CD4-positive, alpha-beta T cell (primary cell): ENCODE measurements at regions of chr1 and their contacts with region 1.

Region 1: GRCh38 chr1:108691942-108692723 is at the start of gene PRPF38B:
- DNase-seq: peak; percentile 88 to 97 (median 91)
- ATAC-seq: peak; percentile 84
- H3K4me3 ChIP-seq: peak within 1 kb of the TSS; percentile 89
- H3K4me3 Mint-ChIP-seq: peak within 1 kb of the TSS; percentile 95
- H3K27ac ChIP-seq: peak within 1 kb of the TSS; percentile 99
- H3K27ac Mint-ChIP-seq: peak within 1 kb of the TSS; percentile 97
- H3K4me1 ChIP-seq: peaks cover 24% of the 10 kb centered on the region
- H3K4me1 Mint-ChIP-seq: peaks cover 51% of the 10 kb centered on the region
- H3K27me3 ChIP-seq: no peaks in the 10 kb centered on the region
- H3K27me3 Mint-ChIP-seq: no peaks in the 10 kb centered on the region
- CTCF ChIP-seq: no peak
- total RNA-seq, gene PRPF38B: 114 to 120 TPM

Region 2: DNA sequence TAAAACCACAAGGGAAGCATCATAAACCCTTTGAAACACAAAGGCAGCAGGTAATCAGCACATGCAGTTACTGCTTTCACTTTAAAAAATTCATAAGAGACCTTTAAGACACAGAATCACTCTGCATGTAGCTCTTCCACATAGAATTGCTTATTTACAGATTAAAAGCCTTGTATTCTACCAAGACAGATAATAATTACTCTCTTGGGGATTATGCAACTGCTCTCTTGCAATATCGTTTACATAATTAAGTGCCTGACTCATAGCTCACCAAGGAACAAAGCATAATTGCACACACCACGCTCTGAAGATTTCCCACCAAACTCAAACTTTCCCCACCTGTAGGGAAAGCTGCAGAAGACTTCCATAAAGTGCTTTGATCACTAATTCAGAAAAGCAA is 815.0 kb before region 1 on chr1:
- CTCF ChIA-PET with region 1: no interaction called
- POLR2A ChIA-PET with region 1: no interaction called
- intact Hi-C with region 1: no loop called
- DNase-seq: peak in 2 of 14 experiments; percentile 36 to 40
- ATAC-seq: no peak
- H3K4me3 ChIP-seq: no peak overlapping the region
- H3K4me3 Mint-ChIP-seq: no peak overlapping the region
- H3K27ac ChIP-seq: no peak overlapping the region
- H3K27ac Mint-ChIP-seq: no peak overlapping the region
- H3K4me1 ChIP-seq: no peaks in the 10 kb centered on the region
- H3K4me1 Mint-ChIP-seq: peaks cover 4% of the 10 kb centered on the region
- H3K27me3 ChIP-seq: no peaks in the 10 kb centered on the region
- H3K27me3 Mint-ChIP-seq: no peaks in the 10 kb centered on the region
- CTCF ChIP-seq: no peak

Region 3: DNA sequence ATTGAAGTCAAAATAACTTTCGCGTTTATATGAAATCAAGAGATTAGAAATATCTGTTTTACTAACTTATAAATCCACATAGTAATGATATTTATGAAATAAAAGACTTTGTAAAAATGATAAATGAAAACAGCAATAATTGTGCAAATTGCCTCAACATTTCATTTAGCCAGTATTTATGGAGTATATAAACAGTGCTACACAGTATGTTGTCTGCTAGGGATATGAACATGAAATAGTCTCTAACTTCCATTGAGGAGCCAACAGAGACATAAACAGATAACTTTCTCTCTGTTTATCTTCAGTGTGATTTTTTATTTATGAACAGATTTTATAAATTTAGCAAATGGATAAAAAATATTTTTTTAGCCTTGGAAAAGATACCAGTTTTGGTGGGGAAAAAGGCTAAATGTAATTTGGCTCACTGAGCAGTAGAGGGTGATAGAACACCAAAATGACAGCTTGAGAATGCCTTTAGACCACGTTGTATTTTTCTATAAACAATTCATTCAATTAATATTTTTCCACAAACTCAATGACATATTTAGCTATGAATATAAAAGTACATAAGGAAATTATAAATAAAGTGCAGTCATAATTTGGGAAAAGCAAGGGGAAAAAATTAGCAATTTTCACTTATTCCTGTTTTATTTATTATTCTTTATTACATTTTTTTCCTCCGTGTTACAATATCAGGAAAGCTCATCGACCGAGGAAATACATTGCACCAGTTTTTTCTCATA is 179.7 kb before region 1 on chr1:
- CTCF ChIA-PET with region 1: interaction called, 11 read pairs
- POLR2A ChIA-PET with region 1: interaction called, 9 read pairs
- intact Hi-C with region 1: loop called in 1 of 2 experiments (anchors 5 kb)
- DNase-seq: peak in 4 of 14 experiments; percentile 6 to 75 (median 69)
- ATAC-seq: peak; percentile 77
- H3K4me3 ChIP-seq: no peak overlapping the region
- H3K4me3 Mint-ChIP-seq: no peak overlapping the region
- H3K27ac ChIP-seq: no peak overlapping the region
- H3K27ac Mint-ChIP-seq: no peak overlapping the region
- H3K4me1 ChIP-seq: no peaks in the 10 kb centered on the region
- H3K4me1 Mint-ChIP-seq: no peaks in the 10 kb centered on the region
- H3K27me3 ChIP-seq: peaks cover 0 to 10% of the 10 kb centered on the region in 2 experiments
- H3K27me3 Mint-ChIP-seq: peaks cover 13% of the 10 kb centered on the region
- CTCF ChIP-seq: peak; percentile 99

Region 4: DNA sequence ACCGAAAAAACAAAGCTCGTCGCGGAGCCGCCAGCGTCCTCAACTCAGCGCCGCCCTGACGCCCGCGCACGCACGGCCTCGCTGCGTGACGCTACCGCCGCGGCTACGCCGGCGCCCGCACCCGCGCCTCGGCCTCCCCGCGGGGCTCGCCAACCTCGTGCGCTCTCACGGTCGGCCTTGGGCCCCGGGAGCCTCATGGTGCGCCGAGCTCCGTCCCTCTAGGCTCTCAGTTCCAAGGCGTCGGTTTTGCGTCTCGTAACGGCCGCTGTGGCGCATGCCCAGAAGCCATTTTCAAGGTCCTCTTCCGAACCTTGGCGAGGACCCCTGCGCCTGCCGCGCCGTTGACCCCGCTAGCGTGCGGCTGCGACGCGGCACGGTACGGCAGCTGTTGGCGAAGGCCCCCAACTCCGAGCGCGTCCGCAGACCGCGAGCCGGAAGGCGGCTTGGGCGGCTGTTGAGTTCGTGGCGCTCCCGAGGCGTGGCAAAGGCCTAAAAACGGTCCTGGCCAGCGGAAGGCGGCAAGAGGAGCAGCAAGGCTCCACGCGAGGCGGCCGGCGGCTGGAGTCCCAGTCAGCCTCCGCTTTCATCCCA is 31.0 kb before region 1 on chr1 and contains the start of gene HENMT1:
- CTCF ChIA-PET with region 1: interaction called, 15 read pairs
- POLR2A ChIA-PET with region 1: interaction called, 292 read pairs
- intact Hi-C with region 1: loop called in 1 of 2 experiments (anchors 1 kb)
- DNase-seq: peak; percentile 65 to 95 (median 76)
- ATAC-seq: peak; percentile 88
- H3K4me3 ChIP-seq: peak within 1 kb of the TSS; percentile 65
- H3K4me3 Mint-ChIP-seq: peak within 1 kb of the TSS; percentile 82
- H3K27ac ChIP-seq: peak within 1 kb of the TSS; percentile 95 to 96
- H3K27ac Mint-ChIP-seq: peak within 1 kb of the TSS; percentile 99
- H3K4me1 ChIP-seq: peaks cover 12% of the 10 kb centered on the region
- H3K4me1 Mint-ChIP-seq: peaks cover 43% of the 10 kb centered on the region
- H3K27me3 ChIP-seq: no peaks in the 10 kb centered on the region
- H3K27me3 Mint-ChIP-seq: no peaks in the 10 kb centered on the region
- CTCF ChIP-seq: no peak
- total RNA-seq, gene HENMT1: 6.3 to 8.2 TPM

Region 5: DNA sequence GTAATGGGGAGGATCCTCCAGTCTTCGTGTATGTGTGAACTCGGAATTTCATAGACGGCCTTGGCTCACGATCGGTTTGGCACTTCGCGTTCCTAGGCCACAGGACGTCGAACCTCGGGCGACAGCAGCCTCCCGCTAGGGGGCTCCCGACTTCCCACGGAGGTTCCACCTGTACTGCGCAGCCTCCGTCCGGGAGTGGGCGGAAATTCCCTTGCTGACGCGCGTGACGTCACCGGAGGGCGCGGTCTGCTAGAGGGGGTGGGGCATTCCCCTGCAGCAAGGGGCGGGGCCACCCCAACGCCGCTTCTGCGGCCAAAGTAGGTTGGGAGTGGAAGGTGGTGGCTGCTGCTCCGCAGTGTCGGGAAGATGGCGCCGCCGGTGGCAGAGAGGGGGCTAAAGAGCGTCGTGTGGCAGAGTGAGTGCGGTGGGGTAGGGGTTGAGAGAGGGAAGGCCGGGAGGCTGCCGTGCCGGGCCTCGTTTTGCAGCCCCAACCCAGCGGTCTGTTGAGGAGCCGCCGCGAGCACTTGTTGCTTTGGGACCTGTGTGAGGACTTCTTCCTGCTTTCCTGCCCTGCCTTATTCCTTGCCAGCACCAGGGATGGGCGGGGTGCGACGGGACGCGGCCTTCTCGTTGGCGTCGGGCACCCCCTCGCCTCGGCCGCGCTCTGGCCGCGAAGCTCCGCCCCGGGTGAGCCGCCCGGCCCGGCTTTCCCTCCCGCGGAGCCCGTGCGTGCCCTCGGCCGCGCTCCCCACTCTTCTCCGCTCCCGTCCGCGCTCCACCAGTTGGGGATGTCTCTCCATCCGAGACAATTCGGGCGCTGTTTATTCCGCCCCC is 54.5 kb after region 1 on chr1 and contains the start of gene STXBP3:
- CTCF ChIA-PET with region 1: interaction called, 4 read pairs
- POLR2A ChIA-PET with region 1: interaction called, 24 read pairs
- intact Hi-C with region 1: loop called (anchors 2 kb)
- DNase-seq: peak; percentile 99 to 100 (median 100)
- ATAC-seq: peak; percentile 95
- H3K4me3 ChIP-seq: peak within 1 kb of the TSS; percentile 92
- H3K4me3 Mint-ChIP-seq: peak within 1 kb of the TSS; percentile 97
- H3K27ac ChIP-seq: peak within 1 kb of the TSS; percentile 90 to 95
- H3K27ac Mint-ChIP-seq: peak within 1 kb of the TSS; percentile 91
- H3K4me1 ChIP-seq: peaks cover 14% of the 10 kb centered on the region
- H3K4me1 Mint-ChIP-seq: peaks cover 44% of the 10 kb centered on the region
- H3K27me3 ChIP-seq: no peaks in the 10 kb centered on the region
- H3K27me3 Mint-ChIP-seq: no peaks in the 10 kb centered on the region
- CTCF ChIP-seq: peak; percentile 92
- total RNA-seq, gene STXBP3: 41.6 to 50.5 TPM

Region 6: GRCh38 chr1:108877348-108878159 is 185.4 kb after region 1 on chr1:
- CTCF ChIA-PET with region 1: no interaction called
- POLR2A ChIA-PET with region 1: interaction called, 9 read pairs
- intact Hi-C with region 1: loop called in 1 of 2 experiments (anchors 5 kb)
- DNase-seq: peak in 1 of 14 experiments; percentile 6
- ATAC-seq: no peak
- H3K4me3 ChIP-seq: peak overlapping the region; percentile 75
- H3K4me3 Mint-ChIP-seq: peak overlapping the region; percentile 95
- H3K27ac ChIP-seq: no peak overlapping the region
- H3K27ac Mint-ChIP-seq: peak overlapping the region; percentile 1
- H3K4me1 ChIP-seq: peaks cover 16% of the 10 kb centered on the region
- H3K4me1 Mint-ChIP-seq: peaks cover 10% of the 10 kb centered on the region
- H3K27me3 ChIP-seq: peaks cover 0 to 6% of the 10 kb centered on the region in 2 experiments
- H3K27me3 Mint-ChIP-seq: no peaks in the 10 kb centered on the region
- CTCF ChIP-seq: no peak

Region 7: GRCh38 chr1:108913105-108913948 is 221.2 kb after region 1 on chr1:
- CTCF ChIA-PET with region 1: no interaction called
- POLR2A ChIA-PET with region 1: no interaction called
- intact Hi-C with region 1: no loop called
- DNase-seq: no peak
- ATAC-seq: no peak
- H3K4me3 ChIP-seq: no peak overlapping the region
- H3K4me3 Mint-ChIP-seq: no peak overlapping the region
- H3K27ac ChIP-seq: no peak overlapping the region
- H3K27ac Mint-ChIP-seq: no peak overlapping the region
- H3K4me1 ChIP-seq: no peaks in the 10 kb centered on the region
- H3K4me1 Mint-ChIP-seq: no peaks in the 10 kb centered on the region
- H3K27me3 ChIP-seq: no peaks in the 10 kb centered on the region
- H3K27me3 Mint-ChIP-seq: no peaks in the 10 kb centered on the region
- CTCF ChIP-seq: no peak

Region 8: DNA sequence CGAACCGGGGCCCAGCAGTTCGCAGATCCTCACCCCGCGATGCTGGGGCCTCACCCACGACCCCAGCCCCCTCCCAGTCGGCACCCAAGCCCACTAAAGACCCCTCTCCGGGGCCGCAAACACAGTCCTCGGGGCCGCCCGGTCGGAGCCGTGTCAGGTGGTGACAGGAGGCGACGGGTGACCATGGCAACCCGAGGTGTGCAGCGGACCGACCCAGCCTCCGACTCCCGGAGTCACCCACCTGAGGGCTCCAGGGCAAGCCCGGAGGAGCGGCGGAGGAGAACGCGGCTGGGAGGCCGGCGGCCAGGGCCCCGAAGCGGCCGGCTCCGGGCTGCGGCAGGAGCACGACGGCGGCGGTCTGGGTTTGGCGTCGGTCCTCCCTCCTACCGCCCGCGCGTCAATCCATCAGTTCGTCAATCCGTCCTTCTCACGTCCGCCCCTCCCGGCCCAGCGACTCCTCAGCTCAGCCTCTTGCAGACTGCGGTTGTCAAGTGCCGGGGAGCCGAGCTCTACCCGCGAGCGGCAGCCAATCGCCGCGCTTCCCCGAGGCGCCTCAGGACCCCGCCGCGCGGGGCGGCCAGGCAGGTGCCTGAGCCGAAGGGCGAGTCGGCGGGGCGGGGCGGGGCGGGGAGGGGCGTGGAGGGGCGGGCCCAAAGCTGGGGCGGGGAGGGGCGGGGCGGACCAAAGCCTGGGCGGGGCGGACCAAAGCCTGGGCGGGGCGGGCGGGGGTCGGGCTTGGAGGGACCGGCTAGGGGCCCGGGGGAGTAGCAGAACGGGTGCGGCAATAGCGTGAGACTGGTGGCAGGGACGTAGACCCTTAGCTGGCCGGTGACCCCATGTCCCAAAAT is 349.7 kb after region 1 on chr1 and contains the start of gene WDR47:
- CTCF ChIA-PET with region 1: no interaction called
- POLR2A ChIA-PET with region 1: interaction called, 17 read pairs
- intact Hi-C with region 1: no loop called
- DNase-seq: peak; percentile 91 to 99 (median 95)
- ATAC-seq: peak; percentile 97
- H3K4me3 ChIP-seq: peak within 1 kb of the TSS; percentile 99
- H3K4me3 Mint-ChIP-seq: peak within 1 kb of the TSS; percentile 97
- H3K27ac ChIP-seq: peak within 1 kb of the TSS; percentile 69 to 79
- H3K27ac Mint-ChIP-seq: peak within 1 kb of the TSS; percentile 91
- H3K4me1 ChIP-seq: peaks cover 14% of the 10 kb centered on the region
- H3K4me1 Mint-ChIP-seq: peaks cover 22% of the 10 kb centered on the region
- H3K27me3 ChIP-seq: no peaks in the 10 kb centered on the region
- H3K27me3 Mint-ChIP-seq: no peaks in the 10 kb centered on the region
- CTCF ChIP-seq: no peak
- total RNA-seq, gene WDR47: 16.2 to 18.7 TPM

Region 9: GRCh38 chr1:109112652-109113285 is 420.6 kb after region 1 on chr1:
- CTCF ChIA-PET with region 1: no interaction called
- POLR2A ChIA-PET with region 1: interaction called, 8 read pairs
- intact Hi-C with region 1: loop called (anchors 2 to 5 kb)
- DNase-seq: peak; percentile 84 to 94 (median 89)
- ATAC-seq: peak; percentile 52
- H3K4me3 ChIP-seq: peak overlapping the region; percentile 63
- H3K4me3 Mint-ChIP-seq: peak overlapping the region; percentile 94
- H3K27ac ChIP-seq: peak overlapping the region in 1 of 2 donors; percentile 51
- H3K27ac Mint-ChIP-seq: peak overlapping the region; percentile 98
- H3K4me1 ChIP-seq: peaks cover 26% of the 10 kb centered on the region
- H3K4me1 Mint-ChIP-seq: peaks cover 31% of the 10 kb centered on the region
- H3K27me3 ChIP-seq: no peaks in the 10 kb centered on the region
- H3K27me3 Mint-ChIP-seq: peaks cover 9% of the 10 kb centered on the region
- CTCF ChIP-seq: peak; percentile 93